Naive thymus-derived CD4-positive, alpha-beta T cell (primary cell): ENCODE measurements at regions of chr4 and their contacts with region 1.

Region 1: GRCh38 chr4:169010125-169011023 is at the start of gene CBR4:
- DNase-seq: peak; percentile 85 to 97 (median 94)
- ATAC-seq: peak; percentile 97
- H3K4me3 ChIP-seq: peak within 1 kb of the TSS; percentile 64
- H3K4me3 Mint-ChIP-seq: peak within 1 kb of the TSS; percentile 93 to 97 (median 96)
- H3K27ac ChIP-seq: peak within 1 kb of the TSS; percentile 87
- H3K27ac Mint-ChIP-seq: peak within 1 kb of the TSS; percentile 92 to 99 (median 97)
- H3K4me1 ChIP-seq: peaks cover 14 to 19% of the 10 kb centered on the region in 2 donors
- H3K4me1 Mint-ChIP-seq: peaks cover 10 to 51% (median 44%) of the 10 kb centered on the region in 7 donors
- H3K27me3 ChIP-seq: no peaks in the 10 kb centered on the region
- H3K27me3 Mint-ChIP-seq: peaks cover 0 to 16% (median 0%) of the 10 kb centered on the region in 5 donors
- total RNA-seq, gene CBR4: 12.4 to 24.5 (median 15.3) TPM

Region 2: GRCh38 chr4:168318266-168318895 is 692.0 kb before region 1 on chr4 and contains the start of gene DDX60:
- CTCF ChIA-PET with region 1: no interaction called
- POLR2A ChIA-PET with region 1: no interaction called
- intact Hi-C with region 1: loop called (anchors 1 kb)
- DNase-seq: peak; percentile 54 to 89 (median 85)
- ATAC-seq: peak; percentile 95
- H3K4me3 ChIP-seq: peak within 1 kb of the TSS; percentile 88
- H3K4me3 Mint-ChIP-seq: peak within 1 kb of the TSS; percentile 84 to 99 (median 96)
- H3K27ac ChIP-seq: peak within 1 kb of the TSS; percentile 95
- H3K27ac Mint-ChIP-seq: peak within 1 kb of the TSS; percentile 96 to 99 (median 99)
- H3K4me1 ChIP-seq: peaks cover 12 to 18% of the 10 kb centered on the region in 2 donors
- H3K4me1 Mint-ChIP-seq: peaks cover 28 to 69% (median 59%) of the 10 kb centered on the region in 7 donors
- H3K27me3 ChIP-seq: no peaks in the 10 kb centered on the region
- H3K27me3 Mint-ChIP-seq: no peaks in the 10 kb centered on the region
- total RNA-seq, gene DDX60: 15.8 to 121 (median 29.0) TPM

Region 3: GRCh38 chr4:168710353-168710946 is 299.9 kb before region 1 on chr4:
- CTCF ChIA-PET with region 1: no interaction called
- POLR2A ChIA-PET with region 1: no interaction called
- intact Hi-C with region 1: loop called in 1 of 2 experiments (anchors 5 kb)
- DNase-seq: no peak
- ATAC-seq: no peak
- H3K4me3 ChIP-seq: no peak overlapping the region
- H3K4me3 Mint-ChIP-seq: no peak overlapping the region
- H3K27ac ChIP-seq: no peak overlapping the region
- H3K27ac Mint-ChIP-seq: no peak overlapping the region
- H3K4me1 ChIP-seq: no peaks in the 10 kb centered on the region
- H3K4me1 Mint-ChIP-seq: peaks cover 0 to 10% (median 4%) of the 10 kb centered on the region in 7 donors
- H3K27me3 ChIP-seq: no peaks in the 10 kb centered on the region
- H3K27me3 Mint-ChIP-seq: peaks cover 0 to 6% (median 5%) of the 10 kb centered on the region in 5 donors

Region 4: GRCh38 chr4:168995537-168996295 is 14.7 kb before region 1 on chr4:
- CTCF ChIA-PET with region 1: interaction called, 4 read pairs
- POLR2A ChIA-PET with region 1: no interaction called
- intact Hi-C with region 1: loop called in 1 of 2 experiments (anchors 1 kb)
- DNase-seq: no peak
- ATAC-seq: no peak
- H3K4me3 ChIP-seq: no peak overlapping the region
- H3K4me3 Mint-ChIP-seq: no peak overlapping the region
- H3K27ac ChIP-seq: no peak overlapping the region
- H3K27ac Mint-ChIP-seq: peak overlapping the region in 1 of 9 donors; percentile 6
- H3K4me1 ChIP-seq: no peaks in the 10 kb centered on the region
- H3K4me1 Mint-ChIP-seq: peaks cover 0 to 10% (median 5%) of the 10 kb centered on the region in 7 donors
- H3K27me3 ChIP-seq: no peaks in the 10 kb centered on the region
- H3K27me3 Mint-ChIP-seq: no peaks in the 10 kb centered on the region

Region 5: GRCh38 chr4:169485791-169486742 is 475.7 kb after region 1 on chr4:
- CTCF ChIA-PET with region 1: interaction called, 3 read pairs
- POLR2A ChIA-PET with region 1: no interaction called
- intact Hi-C with region 1: loop called in 1 of 2 experiments (anchors 2 kb)
- DNase-seq: peak in 7 of 9 donors; percentile 5 to 46 (median 34)
- ATAC-seq: no peak
- H3K4me3 ChIP-seq: no peak overlapping the region
- H3K4me3 Mint-ChIP-seq: no peak overlapping the region
- H3K27ac ChIP-seq: no peak overlapping the region
- H3K27ac Mint-ChIP-seq: no peak overlapping the region
- H3K4me1 ChIP-seq: no peaks in the 10 kb centered on the region
- H3K4me1 Mint-ChIP-seq: no peaks in the 10 kb centered on the region
- H3K27me3 ChIP-seq: no peaks in the 10 kb centered on the region
- H3K27me3 Mint-ChIP-seq: no peaks in the 10 kb centered on the region

Region 6: DNA sequence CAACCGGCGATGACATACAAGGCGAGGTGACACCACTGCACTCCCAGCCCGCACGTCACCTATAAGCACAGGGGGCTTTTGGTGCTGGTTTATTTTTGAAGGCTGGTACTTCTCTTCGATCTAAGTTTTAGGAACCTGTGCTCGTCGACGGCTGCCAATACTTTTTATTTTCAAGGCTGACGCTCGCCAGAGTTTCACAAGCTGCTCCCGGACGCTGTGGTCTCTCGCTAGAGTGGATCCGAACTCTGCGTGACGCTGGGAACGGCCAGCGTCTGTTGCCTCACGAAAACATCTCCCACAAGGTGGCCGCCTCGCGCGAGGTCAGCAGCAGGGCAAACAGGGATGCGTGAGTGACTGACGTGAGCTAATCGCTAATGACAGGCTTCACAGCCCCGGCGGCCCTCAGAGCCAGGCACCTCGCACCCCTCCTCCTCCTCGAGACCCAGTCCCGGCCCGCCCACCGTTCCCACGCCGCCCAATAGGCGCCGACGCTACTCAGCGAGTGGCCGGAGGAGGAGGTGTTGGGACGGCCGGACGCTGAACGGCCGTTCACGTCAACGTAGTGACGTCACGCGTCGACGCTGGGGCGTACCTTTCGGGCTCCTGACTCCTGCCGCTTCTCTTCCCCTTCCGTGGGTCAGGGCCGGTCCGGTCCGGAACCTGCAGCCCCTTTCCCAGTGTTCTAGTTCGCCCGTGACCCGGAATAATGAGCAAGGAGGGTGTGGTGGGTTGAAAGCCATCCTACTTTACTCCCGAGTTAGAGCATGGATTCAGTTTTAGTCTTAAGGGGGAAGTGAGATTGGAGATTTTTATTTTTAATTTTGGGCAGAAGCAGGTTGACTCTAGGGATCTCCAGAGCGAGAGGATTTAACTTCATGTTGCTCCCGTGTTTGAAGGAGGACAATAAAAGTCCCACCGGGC is 609.8 kb after region 1 on chr4 and contains the start of gene CLCN3:
- CTCF ChIA-PET with region 1: no interaction called
- POLR2A ChIA-PET with region 1: no interaction called
- intact Hi-C with region 1: loop called (anchors 1 to 2 kb)
- DNase-seq: peak; percentile 74 to 90 (median 76)
- ATAC-seq: peak; percentile 88
- H3K4me3 ChIP-seq: peak within 1 kb of the TSS; percentile 92
- H3K4me3 Mint-ChIP-seq: peak within 1 kb of the TSS; percentile 89 to 99 (median 98)
- H3K27ac ChIP-seq: peak within 1 kb of the TSS; percentile 96
- H3K27ac Mint-ChIP-seq: peak within 1 kb of the TSS; percentile 88 to 99 (median 98)
- H3K4me1 ChIP-seq: peaks cover 26 to 32% of the 10 kb centered on the region in 2 donors
- H3K4me1 Mint-ChIP-seq: peaks cover 25 to 76% (median 60%) of the 10 kb centered on the region in 7 donors
- H3K27me3 ChIP-seq: no peaks in the 10 kb centered on the region
- H3K27me3 Mint-ChIP-seq: no peaks in the 10 kb centered on the region
- total RNA-seq, gene CLCN3: 15.5 to 35.0 (median 29.3) TPM

Region 7: GRCh38 chr4:169634975-169635374 is 624.6 kb after region 1 on chr4:
- CTCF ChIA-PET with region 1: no interaction called
- POLR2A ChIA-PET with region 1: no interaction called
- intact Hi-C with region 1: no loop called
- DNase-seq: no peak
- ATAC-seq: no peak
- H3K4me3 ChIP-seq: no peak overlapping the region
- H3K4me3 Mint-ChIP-seq: no peak overlapping the region
- H3K27ac ChIP-seq: no peak overlapping the region
- H3K27ac Mint-ChIP-seq: no peak overlapping the region
- H3K4me1 ChIP-seq: peaks cover 0 to 4% of the 10 kb centered on the region in 2 donors
- H3K4me1 Mint-ChIP-seq: peaks cover 14 to 42% (median 22%) of the 10 kb centered on the region in 7 donors
- H3K27me3 ChIP-seq: no peaks in the 10 kb centered on the region
- H3K27me3 Mint-ChIP-seq: no peaks in the 10 kb centered on the region